RWPE1 (cell line): ENCODE measurements at regions of chr10 and their contacts with region 1.

Region 1: DNA sequence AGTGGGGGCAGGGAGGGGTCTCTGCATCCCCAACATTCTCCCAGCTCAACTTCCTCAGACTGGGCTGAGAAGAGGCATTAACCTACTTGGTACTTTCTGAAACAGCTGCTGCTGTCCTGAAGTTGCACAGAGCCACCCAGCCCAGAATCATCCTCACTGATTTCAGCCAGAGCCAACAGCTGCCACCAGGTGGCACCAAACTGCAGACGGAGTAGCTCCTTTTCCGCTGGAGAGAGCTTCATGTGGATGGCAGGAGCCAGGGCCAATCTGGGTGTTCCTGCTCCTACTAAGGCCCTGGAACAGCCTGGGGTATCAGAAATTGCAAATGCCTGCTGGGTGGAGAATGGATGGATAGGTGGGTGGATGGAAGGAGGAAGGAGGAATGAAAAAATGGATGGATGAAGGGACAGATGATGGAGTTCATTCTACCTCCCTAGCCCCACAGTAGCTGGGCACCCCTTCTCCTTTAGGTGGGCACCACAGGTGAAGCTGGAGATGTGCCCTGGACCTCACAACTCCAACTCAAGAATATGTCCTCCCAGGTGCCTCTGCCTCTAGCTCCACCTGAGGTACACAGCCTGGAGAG is 11.8 kb upstream of the DRGX start:
- DNase-seq: peak; percentile 79
- H3K27ac ChIP-seq: no peak overlapping the region
- CTCF ChIP-seq: peak; percentile 85

Region 2: DNA sequence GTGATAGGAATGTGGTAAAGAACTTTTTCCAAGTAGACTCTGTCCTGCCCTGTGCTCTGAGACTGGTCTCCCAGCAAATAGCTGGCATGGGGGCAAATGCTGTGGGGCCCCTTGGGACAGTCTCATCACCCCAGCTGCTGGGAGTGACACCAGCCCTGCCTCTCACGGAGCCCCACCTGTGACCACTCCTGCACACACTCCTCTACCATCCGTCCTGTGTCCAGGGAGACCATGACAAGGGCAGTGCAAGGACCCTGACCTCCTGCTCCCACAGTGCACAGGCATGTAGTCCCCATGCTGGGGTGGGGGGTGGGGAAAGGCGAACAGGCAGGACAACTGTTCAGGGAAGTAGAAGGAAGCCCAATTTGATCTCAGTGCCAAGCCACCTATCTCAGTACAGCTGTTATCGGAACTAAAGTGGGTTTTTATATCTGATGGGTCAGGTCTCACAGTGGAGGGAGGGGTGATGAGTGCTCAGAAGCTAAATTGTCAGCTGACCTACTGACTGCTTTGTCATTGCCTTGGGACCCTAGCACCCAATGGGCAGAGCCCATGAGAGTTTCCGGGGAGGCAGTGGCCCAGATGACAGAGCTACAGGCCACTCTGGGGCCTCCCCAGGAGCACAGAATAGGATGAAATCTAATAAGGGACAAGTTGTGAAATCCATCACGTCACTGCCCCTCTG is 316.8 kb before region 1 on chr10:
- CTCF ChIA-PET with region 1: no interaction called
- POLR2A ChIA-PET with region 1: no interaction called
- DNase-seq: no peak
- H3K27ac ChIP-seq: no peak overlapping the region
- CTCF ChIP-seq: no peak

Region 3: DNA sequence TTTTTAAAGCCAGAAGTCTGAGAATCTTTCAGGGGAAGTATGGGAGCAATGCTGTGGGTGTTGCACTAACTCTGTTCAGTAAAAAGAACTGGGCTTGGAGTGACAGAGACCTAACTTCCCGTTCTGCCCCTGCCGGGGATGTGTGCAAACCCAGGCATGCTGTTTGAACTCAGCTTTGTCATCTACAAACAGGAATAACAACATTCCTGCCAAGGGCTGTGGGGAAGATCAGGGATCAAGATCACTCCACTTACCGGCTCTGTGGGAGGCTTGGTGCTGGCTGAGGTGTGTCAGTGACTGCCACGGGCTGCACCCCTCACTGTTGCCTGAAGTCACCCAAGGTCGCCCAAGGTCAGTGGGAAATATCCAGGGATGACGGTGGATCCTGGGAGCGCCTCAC is 11.4 kb after region 1 on chr10:
- CTCF ChIA-PET with region 1: interaction called, 12 read pairs
- POLR2A ChIA-PET with region 1: no interaction called
- DNase-seq: peak; percentile 95
- H3K27ac ChIP-seq: no peak overlapping the region
- CTCF ChIP-seq: no peak

Region 4: DNA sequence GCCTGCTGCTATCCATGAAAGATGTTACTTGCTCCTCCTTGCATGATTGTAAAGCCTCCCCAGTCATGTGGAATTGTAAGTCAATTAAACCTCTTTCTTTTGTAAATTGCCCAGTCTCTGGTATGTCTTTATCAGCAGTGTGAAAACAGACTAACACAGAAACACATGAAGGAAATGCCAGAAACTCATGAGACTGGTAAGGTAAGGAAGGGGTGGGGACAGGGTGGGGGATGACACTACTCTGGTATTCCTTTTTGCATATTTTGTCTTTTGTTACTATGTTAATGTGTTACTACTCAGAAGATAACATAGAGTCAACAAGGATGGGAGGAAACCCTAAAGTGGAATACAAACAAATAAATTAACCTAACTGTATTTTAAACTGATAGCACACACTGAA is 58.1 kb after region 1 on chr10:
- CTCF ChIA-PET with region 1: no interaction called
- POLR2A ChIA-PET with region 1: no interaction called
- DNase-seq: no peak
- H3K27ac ChIP-seq: no peak overlapping the region
- CTCF ChIP-seq: no peak

Region 5: DNA sequence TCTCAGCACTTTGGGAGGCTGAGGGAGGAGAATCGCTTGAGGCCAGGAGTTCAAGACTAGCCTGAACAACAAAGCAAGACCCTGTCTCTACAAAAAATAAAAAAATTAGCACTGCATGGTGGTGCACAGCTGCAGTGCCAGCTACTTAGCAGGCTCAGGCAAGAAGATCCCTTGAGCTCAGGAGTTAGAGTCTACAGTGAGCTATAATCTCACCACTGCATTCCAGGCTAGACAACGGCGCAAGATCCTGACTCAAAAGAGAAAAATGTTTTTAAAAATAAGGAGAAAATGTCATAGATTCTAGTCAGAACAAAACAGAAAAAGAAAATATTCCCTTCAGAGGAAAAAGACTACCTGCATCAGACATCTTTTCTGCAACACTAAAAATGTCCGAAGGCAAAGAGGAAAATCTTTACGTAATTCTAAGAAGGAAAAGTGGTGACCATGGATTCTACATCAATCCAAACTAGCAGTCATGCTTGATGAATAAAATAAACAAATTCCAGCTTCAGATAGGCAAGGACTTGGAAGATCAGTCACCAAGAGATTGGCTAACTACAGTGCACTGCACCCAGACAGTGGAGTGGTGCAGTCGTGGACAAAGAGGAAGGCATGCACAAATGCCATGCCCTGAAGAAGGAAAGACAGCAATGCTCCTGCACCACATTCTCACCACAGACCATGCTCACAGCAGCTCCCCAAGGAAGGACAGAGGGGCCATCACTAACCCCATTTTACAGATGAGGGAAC is 77.0 kb after region 1 on chr10:
- CTCF ChIA-PET with region 1: interaction called, 11 read pairs
- POLR2A ChIA-PET with region 1: no interaction called
- DNase-seq: no peak
- H3K27ac ChIP-seq: no peak overlapping the region
- CTCF ChIP-seq: no peak

Region 6: GRCh38 chr10:49512121-49512809 is 104.6 kb after region 1 on chr10:
- CTCF ChIA-PET with region 1: interaction called, 19 read pairs
- POLR2A ChIA-PET with region 1: no interaction called
- DNase-seq: no peak
- H3K27ac ChIP-seq: no peak overlapping the region
- CTCF ChIP-seq: peak; percentile 48

Region 7: GRCh38 chr10:49518982-49519578 is 111.4 kb after region 1 on chr10:
- CTCF ChIA-PET with region 1: interaction called, 22 read pairs
- POLR2A ChIA-PET with region 1: no interaction called
- DNase-seq: peak; percentile 69
- H3K27ac ChIP-seq: no peak overlapping the region
- CTCF ChIP-seq: peak; percentile 63

Region 8: DNA sequence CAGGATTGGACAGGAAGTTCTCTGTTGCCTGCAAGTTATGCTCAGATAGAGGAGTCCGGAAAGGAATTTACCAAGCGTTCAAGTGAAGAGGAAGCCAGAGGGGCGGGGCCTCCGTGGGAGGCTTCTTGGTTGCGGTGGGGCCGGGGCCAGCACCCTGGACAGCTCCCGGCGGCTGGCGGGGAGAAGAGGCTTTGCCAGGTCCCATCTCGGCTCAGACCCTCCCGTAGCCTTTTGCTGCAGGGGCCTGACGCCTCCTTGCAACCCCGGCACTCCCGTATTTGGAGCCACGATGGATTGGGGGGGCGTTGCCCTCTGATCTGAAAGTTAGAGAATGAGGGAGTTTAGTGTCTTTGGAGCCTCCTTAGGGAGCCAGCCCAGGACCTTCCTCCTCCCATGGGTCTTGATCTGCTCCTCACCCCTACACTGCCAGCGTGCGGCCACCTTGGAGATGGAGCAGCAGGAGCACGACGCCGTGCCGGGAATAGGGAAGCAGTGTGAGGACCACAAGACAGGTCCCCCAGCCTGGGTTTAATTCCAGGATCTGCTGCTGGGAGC is 199.4 kb after region 1 on chr10:
- CTCF ChIA-PET with region 1: no interaction called
- POLR2A ChIA-PET with region 1: no interaction called
- DNase-seq: peak; percentile 77
- H3K27ac ChIP-seq: no peak overlapping the region
- CTCF ChIP-seq: no peak